Right ventricle myocardium superior (tissue), 1 donor: ENCODE measurements at regions of chr17 and their contacts with region 1.

Region 1: GRCh38 chr17:41648411-41649195 is 24.2 kb upstream of the KRT17 start:
- DNase-seq: peak; percentile 90
- ATAC-seq: peak; percentile 97

Region 2: GRCh38 chr17:41392278-41392677 is 256.3 kb before region 1 on chr17:
- intact Hi-C with region 1: no loop called
- DNase-seq: no peak
- ATAC-seq: no peak

Region 3: DNA sequence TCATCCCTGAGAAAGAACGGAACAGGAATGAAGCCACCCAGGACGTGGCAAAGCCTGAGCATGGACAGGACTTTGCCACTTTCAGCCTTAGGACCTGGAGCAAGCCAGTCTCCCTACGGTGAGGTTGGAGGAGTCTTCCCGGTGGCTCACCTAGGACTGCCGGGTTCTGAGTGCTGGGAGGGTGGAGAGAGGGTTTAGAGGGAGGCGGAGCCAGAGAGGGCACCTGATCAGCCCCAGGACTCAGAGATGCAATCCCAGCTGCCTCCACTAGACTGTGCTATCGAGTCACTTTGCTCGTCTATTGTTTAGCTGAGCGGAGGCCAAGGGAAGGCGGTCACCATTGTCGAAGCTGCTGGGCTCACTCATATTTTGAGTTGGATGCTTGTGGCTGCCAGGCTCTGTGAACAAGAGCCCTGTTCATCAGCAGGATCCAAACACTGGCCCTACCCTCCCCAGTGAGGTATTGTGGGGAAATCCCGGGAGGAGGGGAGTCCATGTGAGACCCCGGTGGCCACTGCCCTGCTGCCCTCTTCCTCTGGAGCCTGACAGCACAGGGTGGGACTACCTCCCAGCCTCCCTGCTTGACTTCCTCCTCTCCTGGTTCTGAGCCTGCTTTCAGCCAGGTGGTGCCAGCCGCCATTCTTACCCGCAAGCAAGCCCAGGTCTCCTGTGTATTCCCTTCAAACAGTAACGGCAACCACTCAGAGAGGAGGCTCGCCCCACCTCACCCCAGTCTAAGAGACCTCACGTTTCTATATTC is 68.9 kb before region 1 on chr17:
- intact Hi-C with region 1: loop called (anchors 5 kb)
- DNase-seq: peak; percentile 74
- ATAC-seq: peak; percentile 84

Region 4: DNA sequence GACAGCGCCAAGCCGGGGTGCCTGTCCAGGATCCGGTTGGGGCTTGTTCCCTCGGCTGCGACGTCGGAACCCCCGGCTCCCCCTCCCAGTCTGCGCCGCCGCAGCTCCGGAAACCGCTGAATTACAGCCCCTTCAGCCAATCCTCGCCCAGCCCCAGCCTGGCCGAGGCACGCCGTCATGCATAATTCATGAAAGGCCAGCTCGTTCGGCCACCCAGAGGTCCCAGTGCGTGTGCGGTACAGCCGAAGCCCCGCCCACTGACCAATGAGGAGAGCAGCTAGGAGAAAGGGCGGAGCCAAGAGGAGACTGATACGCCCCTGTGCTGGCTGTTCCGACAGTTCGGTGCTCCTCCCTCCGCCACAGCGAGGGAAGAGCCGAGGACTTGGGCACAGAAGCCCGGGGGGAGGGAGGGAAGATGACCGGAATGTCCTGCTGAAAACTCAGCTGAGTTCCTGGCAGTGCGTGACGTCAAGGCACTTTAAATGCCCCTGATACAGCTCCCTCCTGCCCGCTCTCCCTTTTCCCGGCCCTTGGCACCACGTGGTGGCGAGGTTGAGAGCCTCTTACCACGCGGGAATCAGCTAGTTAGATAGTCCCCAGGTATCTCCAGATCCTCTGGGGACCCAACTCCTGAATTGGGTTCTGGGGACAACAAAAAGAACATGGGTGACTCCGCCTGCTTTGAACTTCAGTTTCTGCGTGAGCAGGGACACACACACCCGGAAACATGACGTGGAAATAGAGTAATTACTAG is 740.0 kb after region 1 on chr17 and contains the start of gene STAT3:
- intact Hi-C with region 1: no loop called
- DNase-seq: peak; percentile 100
- ATAC-seq: peak; percentile 95
- total RNA-seq, gene STAT3: 127 TPM